Thyroid gland (tissue), 4 donors: ENCODE measurements at regions of chr4 and their contacts with region 1.

Region 1: GRCh38 chr4:86927843-86928395 is 6.9 kb upstream of the AFF1 start:
- DNase-seq: no peak
- H3K4me3 ChIP-seq: no peak overlapping the region
- H3K27ac ChIP-seq: peak overlapping the region in 2 of 3 donors; percentile 39 to 64
- H3K4me1 ChIP-seq: peaks cover 0 to 7% of the 10 kb centered on the region in 2 donors
- H3K27me3 ChIP-seq: no peaks in the 10 kb centered on the region
- CTCF ChIP-seq: no peak
- POLR2A ChIP-seq: no peak

Region 2: DNA sequence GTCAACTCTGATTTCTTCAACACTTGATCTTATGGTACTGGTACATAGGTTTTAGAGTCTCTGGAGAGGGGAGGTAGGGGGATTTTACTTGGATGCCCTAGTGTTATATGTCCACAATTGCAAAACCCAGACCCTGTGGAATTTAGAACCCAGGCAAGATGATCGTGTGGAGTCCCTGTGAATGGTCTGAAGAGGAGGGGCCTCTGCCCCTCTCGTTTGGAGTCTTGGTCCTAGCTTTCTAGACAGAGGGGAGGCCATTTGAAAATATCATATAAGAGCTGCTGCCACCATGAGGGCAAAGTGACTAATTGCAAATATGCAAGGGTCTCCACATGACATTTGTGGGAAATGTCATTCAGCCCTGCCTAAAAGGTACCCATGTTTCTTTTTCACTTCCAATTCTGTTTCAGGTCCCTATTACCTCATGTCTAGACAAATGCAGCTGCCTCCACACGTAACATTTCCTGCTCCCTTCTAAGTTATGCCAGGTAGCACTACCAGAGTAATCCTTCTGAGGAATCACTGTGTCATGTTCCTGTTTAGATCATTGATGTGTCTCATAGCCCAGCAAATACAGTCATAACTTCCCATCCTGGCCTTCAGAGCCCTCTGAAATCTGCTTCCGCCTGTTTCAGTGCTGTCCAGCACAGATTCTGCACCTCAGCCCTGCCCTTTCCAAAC is 165.7 kb after region 1 on chr4:
- intact Hi-C with region 1: loop called (anchors 10 kb)
- DNase-seq: peak in 1 of 2 donors; percentile 33
- H3K4me3 ChIP-seq: no peak overlapping the region
- H3K27ac ChIP-seq: peak overlapping the region; percentile 73 to 87 (median 75)
- H3K4me1 ChIP-seq: peaks cover 63 to 76% of the 10 kb centered on the region in 2 donors
- H3K27me3 ChIP-seq: no peaks in the 10 kb centered on the region
- CTCF ChIP-seq: peak; percentile 15 to 55 (median 46)
- POLR2A ChIP-seq: no peak

Region 3: DNA sequence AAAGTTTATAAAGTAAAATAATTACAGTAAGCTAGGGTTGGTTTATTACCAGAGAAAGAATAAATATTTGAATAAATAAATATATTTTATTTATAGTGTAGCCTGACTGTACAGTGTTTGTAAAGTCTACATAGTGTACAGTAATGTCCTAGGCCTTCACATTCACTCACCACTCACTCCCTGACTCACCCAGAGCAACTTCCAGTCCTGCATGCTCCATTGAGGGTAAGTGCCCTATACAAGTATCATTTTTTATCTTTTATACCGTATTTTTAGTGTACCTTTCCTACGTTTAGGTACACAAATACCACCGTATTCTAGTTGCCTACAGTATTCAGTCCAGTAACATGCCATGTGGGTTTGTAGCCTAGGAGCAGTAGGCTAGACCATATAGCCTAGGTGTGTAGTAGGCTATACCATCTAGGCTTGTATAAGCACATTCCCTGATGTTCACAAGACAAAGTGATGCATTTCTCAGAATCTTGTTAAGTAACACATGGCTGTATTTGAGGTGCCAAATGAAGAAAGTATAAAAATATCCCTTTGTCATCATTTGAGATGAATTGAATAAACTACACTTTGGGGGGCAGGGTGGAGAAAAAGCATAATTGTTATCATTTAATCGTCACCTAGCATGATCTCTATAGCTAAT is 307.2 kb after region 1 on chr4:
- intact Hi-C with region 1: loop called (anchors 10 kb)
- DNase-seq: no peak
- H3K4me3 ChIP-seq: peak overlapping the region in 1 of 3 donors; percentile 26
- H3K27ac ChIP-seq: no peak overlapping the region
- H3K4me1 ChIP-seq: peaks cover 5 to 20% of the 10 kb centered on the region in 2 donors
- H3K27me3 ChIP-seq: no peaks in the 10 kb centered on the region
- CTCF ChIP-seq: no peak
- POLR2A ChIP-seq: no peak